Aorta (tissue), 5 donors: ENCODE measurements at regions of chr17 and their contacts with region 1.

Region 1: DNA sequence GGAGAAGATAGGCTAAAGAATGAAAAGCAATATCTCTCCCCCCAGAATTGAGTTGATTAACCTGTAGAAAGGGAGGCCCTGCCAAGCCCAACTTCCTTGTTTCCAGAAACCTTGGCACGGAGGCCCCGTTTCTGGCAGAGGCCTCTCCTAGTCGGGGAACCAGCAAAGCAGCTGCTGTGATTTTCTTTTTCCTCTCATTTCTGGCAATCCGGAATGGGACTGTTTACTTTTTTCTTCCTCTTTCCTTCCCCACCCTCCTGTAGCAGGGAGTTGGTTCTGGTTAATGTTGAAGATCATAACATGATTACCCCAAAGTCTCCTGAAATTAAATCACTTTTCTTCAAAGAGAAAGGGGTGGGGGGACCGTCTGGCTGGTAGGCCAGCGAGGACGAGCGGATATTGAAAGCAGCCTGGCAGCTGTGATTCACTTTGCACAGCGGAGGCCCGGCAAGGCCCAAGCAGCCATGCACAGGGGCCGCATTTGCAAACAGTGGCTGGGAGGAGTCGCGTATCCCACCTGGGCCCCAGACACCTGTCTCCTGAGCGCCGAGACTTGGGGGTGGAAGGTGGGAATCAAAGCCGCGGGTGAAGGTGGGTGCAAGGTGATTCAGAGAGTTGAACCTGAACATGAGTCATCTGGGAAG is 51.5 kb downstream of the NTN1 start:
- DNase-seq: peak; percentile 86 to 87
- ATAC-seq: peak; percentile 64
- H3K4me3 ChIP-seq: no peak overlapping the region
- H3K27ac ChIP-seq: peak overlapping the region; percentile 29 to 83
- H3K4me1 ChIP-seq: peaks cover 5 to 6% of the 10 kb centered on the region in 2 donors
- H3K27me3 ChIP-seq: no peaks in the 10 kb centered on the region

Region 2: GRCh38 chr17:9032583-9032982 is 40.2 kb before region 1 on chr17:
- intact Hi-C with region 1: loop called in 1 of 2 experiments (anchors 5 kb)
- DNase-seq: no peak
- ATAC-seq: no peak
- H3K4me3 ChIP-seq: no peak overlapping the region
- H3K27ac ChIP-seq: peak overlapping the region in 1 of 2 donors; percentile 24
- H3K4me1 ChIP-seq: peaks cover 2 to 12% of the 10 kb centered on the region in 2 donors
- H3K27me3 ChIP-seq: no peaks in the 10 kb centered on the region